ENCODE measurements at regions of chr10 and their contacts with region 1.

Region 1: GRCh38 chr10:12348870-12349628 is at the start of gene CAMK1D:
- DNase-seq: peak; percentile 91
- ATAC-seq: peak; percentile 65
- H3K4me3 Mint-ChIP-seq: peak within 1 kb of the TSS; percentile 92
- H3K27ac Mint-ChIP-seq: peak within 1 kb of the TSS; percentile 93
- H3K4me1 Mint-ChIP-seq: peaks cover 39% of the 10 kb centered on the region
- H3K27me3 Mint-ChIP-seq: peaks cover 3% of the 10 kb centered on the region
- CTCF ChIP-seq: no peak
- total RNA-seq, gene CAMK1D: 13.8 TPM

Region 2: DNA sequence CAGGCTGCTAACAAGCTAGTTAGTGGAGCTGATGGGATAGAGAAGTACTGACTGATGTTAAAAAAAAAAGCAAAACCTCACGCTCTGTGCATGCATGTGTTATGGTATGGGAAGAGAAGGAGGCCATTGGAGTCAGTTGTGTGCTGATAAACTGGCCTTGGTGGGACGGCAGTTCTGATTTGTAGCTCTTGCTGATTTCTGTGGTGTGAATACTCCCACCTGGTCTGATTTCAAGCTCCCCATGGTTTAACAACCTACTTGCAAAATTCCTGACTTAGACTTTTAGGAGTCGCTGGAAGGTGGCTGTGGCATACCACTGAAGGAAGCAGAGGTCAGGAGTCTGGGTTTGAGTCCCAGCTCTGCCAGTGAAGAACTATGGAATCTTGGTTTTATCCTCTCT is 15.5 kb after region 1 on chr10:
- CTCF ChIA-PET with region 1: interaction called, 3 read pairs
- POLR2A ChIA-PET with region 1: interaction called, 14 read pairs
- intact Hi-C with region 1: no loop called
- DNase-seq: no peak
- ATAC-seq: no peak
- H3K4me3 Mint-ChIP-seq: no peak overlapping the region
- H3K27ac Mint-ChIP-seq: no peak overlapping the region
- H3K4me1 Mint-ChIP-seq: peaks cover 40% of the 10 kb centered on the region
- H3K27me3 Mint-ChIP-seq: no peaks in the 10 kb centered on the region
- CTCF ChIP-seq: no peak

Region 3: GRCh38 chr10:12381536-12382156 is 32.6 kb after region 1 on chr10:
- CTCF ChIA-PET with region 1: no interaction called
- POLR2A ChIA-PET with region 1: interaction called, 10 read pairs
- intact Hi-C with region 1: no loop called
- DNase-seq: no peak
- ATAC-seq: peak; percentile 51
- H3K4me3 Mint-ChIP-seq: no peak overlapping the region
- H3K27ac Mint-ChIP-seq: peak overlapping the region; percentile 67
- H3K4me1 Mint-ChIP-seq: peaks cover 20% of the 10 kb centered on the region
- H3K27me3 Mint-ChIP-seq: no peaks in the 10 kb centered on the region
- CTCF ChIP-seq: no peak